ENCODE measurements at regions of chr19 and their contacts with region 1.

Region 1: DNA sequence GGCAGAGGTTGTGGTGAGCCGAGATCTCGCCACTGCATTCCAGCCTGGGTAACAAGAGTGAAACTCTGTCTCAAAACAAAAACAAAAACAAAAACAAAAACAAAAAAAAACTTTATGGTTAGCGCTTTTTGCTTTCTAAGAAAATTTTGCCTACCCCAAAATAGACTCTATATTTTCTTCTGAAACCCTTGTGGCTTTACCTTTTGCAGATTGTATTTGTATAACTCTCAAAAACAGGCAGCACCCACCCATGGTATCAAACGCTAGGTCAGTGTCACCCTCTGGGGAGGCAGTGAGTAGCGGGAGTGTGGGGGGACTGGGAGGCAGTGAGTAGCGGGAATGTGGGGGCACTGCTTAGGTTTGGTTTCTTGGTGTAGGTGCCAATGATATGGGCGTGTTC is 7.5 kb upstream of the SLC39A3 start:
- DNase-seq: no peak
- H3K4me3 ChIP-seq: no peak overlapping the region
- H3K27ac ChIP-seq: no peak overlapping the region
- H3K4me1 ChIP-seq: peaks cover 0 to 8% (median 0%) of the 10 kb centered on the region in 3 donors
- H3K27me3 ChIP-seq: no peaks in the 10 kb centered on the region
- CTCF ChIP-seq: no peak
- POLR2A ChIP-seq: no peak

Region 2: DNA sequence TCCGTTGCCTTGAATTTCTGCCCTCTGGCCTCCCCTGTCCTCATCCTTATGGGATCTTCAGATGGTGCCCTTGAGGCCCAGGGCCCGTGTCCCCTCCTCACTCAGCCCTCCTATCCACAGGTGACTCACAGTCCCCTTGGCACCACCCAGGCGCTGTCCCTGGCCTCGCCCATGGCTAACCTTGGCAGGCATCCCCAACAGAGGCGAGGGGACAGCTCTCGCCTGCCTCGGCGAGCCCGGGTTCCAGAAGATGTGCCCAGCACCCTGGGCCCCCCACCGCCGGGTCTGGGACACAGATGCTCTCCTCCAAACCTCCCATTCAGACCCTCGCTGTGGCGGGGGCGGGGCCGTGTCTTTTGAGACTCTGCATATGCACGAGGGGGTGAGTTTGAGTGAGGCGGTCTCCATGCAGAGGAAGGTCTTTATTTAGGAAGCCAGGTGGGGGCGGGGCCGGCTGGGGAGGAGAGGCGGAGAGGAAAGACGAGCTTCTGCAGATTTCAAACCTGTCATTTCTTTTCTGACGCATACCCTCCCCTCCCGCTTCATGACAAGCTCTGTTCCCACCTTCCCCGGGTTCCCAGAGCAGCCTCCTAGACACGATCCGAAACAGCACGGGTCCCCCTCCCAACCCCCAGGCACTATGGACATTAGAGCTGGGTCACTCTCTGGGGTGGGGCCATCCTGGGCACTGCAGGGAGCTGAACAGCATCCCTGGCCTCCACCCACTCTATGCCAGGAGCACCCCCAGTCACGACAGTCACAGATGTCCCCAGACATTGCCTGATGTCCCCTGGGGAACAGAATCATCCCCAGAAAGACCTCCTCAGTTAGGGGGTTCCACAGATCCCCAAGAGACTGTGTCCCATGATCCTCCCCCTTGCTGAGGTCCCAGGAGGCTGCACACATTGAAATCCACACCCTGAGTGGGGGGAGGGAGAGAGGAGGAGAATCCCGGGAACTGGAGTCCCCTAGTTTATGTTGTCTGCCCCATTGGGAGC is 93.3 kb before region 1 on chr19:
- intact Hi-C with region 1: loop called (anchors 5 kb)
- DNase-seq: no peak
- H3K4me3 ChIP-seq: peak overlapping the region in 1 of 4 donors; percentile 26
- H3K27ac ChIP-seq: peak overlapping the region in 3 of 4 donors; percentile 45 to 55 (median 54)
- H3K4me1 ChIP-seq: peaks cover 0 to 24% (median 14%) of the 10 kb centered on the region in 3 donors
- H3K27me3 ChIP-seq: no peaks in the 10 kb centered on the region
- CTCF ChIP-seq: no peak
- POLR2A ChIP-seq: no peak